CD8-positive, alpha-beta memory T cell (primary cell): ENCODE measurements at regions of chr2 and their contacts with region 1.

Region 1: DNA sequence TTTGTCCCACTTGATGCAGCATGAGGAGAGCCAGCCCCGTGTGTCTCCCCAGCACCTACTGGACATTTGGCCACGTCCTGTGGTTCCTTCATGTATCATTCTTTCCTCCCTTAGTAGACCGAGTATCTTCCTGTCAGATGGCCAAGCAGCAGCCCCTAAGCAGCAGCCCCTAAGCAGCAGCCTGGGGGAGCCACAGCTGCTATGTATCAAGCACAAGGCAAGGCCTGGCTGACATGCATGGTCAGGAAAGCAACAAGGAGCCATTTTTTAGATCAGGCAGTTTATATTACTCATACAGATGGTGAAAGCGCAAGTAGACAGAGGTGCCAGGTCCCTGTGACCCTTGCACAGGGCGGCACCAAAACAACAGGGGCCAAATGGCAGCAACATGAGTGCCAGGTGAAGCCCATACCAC is 22.1 kb downstream of the CHCHD5 start:
- DNase-seq: no peak
- H3K4me3 ChIP-seq: no peak overlapping the region
- H3K4me3 Mint-ChIP-seq: no peak overlapping the region
- H3K27ac ChIP-seq: no peak overlapping the region
- H3K27ac Mint-ChIP-seq: no peak overlapping the region
- H3K4me1 ChIP-seq: no peaks in the 10 kb centered on the region
- H3K4me1 Mint-ChIP-seq: no peaks in the 10 kb centered on the region
- H3K27me3 ChIP-seq: no peaks in the 10 kb centered on the region
- H3K27me3 Mint-ChIP-seq: peaks cover 0 to 3% of the 10 kb centered on the region in 2 donors

Region 2: GRCh38 chr2:112584134-112584890 is 22.2 kb before region 1 on chr2 and contains the start of gene CHCHD5:
- CTCF ChIA-PET with region 1: interaction called, 28 read pairs
- POLR2A ChIA-PET with region 1: no interaction called
- DNase-seq: peak; percentile 89 to 97 (median 94)
- H3K4me3 ChIP-seq: peak within 1 kb of the TSS; percentile 96
- H3K4me3 Mint-ChIP-seq: peak within 1 kb of the TSS; percentile 86 to 98 (median 96)
- H3K27ac ChIP-seq: peak within 1 kb of the TSS; percentile 89
- H3K27ac Mint-ChIP-seq: peak within 1 kb of the TSS; percentile 90 to 99 (median 98)
- H3K4me1 ChIP-seq: peaks cover 29% of the 10 kb centered on the region
- H3K4me1 Mint-ChIP-seq: peaks cover 30 to 42% (median 39%) of the 10 kb centered on the region in 3 donors
- H3K27me3 ChIP-seq: no peaks in the 10 kb centered on the region
- H3K27me3 Mint-ChIP-seq: no peaks in the 10 kb centered on the region
- total RNA-seq, gene CHCHD5: 33.1 to 36.6 TPM

Region 3: DNA sequence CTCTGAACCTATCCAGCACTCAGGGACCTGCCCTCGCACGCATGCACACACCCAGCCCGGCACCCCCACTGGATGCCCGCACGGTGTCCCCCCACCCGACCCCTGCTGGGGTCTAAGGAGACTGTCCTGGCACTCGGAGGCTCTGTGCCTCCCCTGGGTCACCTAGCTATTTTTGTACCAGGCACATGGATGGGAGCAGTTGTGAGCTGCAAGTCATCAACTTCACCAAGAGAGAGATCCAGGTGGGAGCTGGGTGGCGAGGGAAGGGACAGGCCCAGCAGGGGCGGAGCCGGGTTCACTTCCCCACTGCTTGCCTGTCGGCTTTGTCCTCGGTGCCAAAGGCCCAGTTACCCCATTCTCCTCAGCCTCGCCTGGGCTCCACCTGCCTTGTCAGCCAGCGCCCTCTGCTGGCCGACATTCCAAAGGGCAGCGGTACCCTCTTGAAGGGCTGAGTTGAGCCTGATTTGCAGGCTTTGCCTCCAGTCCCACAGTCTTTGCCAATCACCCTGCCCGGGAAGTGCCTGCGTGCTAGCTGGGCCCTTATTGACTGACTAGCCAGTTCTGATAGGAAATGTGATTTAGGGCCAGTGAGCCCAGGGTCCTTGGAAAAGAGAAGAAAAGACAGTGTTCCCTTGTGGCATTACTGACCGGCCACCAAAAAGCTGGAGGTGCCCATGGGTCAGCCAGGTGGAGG is 120.1 kb after region 1 on chr2:
- CTCF ChIA-PET with region 1: interaction called, 92 read pairs
- POLR2A ChIA-PET with region 1: interaction called, 3 read pairs
- DNase-seq: peak; percentile 76 to 90 (median 81)
- H3K4me3 ChIP-seq: no peak overlapping the region
- H3K4me3 Mint-ChIP-seq: no peak overlapping the region
- H3K27ac ChIP-seq: no peak overlapping the region
- H3K27ac Mint-ChIP-seq: peak overlapping the region in 1 of 8 donors; percentile 19
- H3K4me1 ChIP-seq: peaks cover 5% of the 10 kb centered on the region
- H3K4me1 Mint-ChIP-seq: peaks cover 4 to 5% (median 5%) of the 10 kb centered on the region in 3 donors
- H3K27me3 ChIP-seq: no peaks in the 10 kb centered on the region
- H3K27me3 Mint-ChIP-seq: peaks cover 0 to 9% of the 10 kb centered on the region in 2 donors

Region 4: GRCh38 chr2:112764071-112765044 is 157.9 kb after region 1 on chr2 and contains the start of gene CKAP2L:
- CTCF ChIA-PET with region 1: no interaction called
- POLR2A ChIA-PET with region 1: no interaction called
- DNase-seq: peak; percentile 94 to 97 (median 94)
- H3K4me3 ChIP-seq: peak within 1 kb of the TSS; percentile 90
- H3K4me3 Mint-ChIP-seq: peak within 1 kb of the TSS; percentile 88 to 98 (median 95)
- H3K27ac ChIP-seq: peak within 1 kb of the TSS; percentile 79
- H3K27ac Mint-ChIP-seq: peak within 1 kb of the TSS; percentile 65 to 96 (median 90)
- H3K4me1 ChIP-seq: peaks cover 14% of the 10 kb centered on the region
- H3K4me1 Mint-ChIP-seq: peaks cover 29 to 47% (median 39%) of the 10 kb centered on the region in 3 donors
- H3K27me3 ChIP-seq: no peaks in the 10 kb centered on the region
- H3K27me3 Mint-ChIP-seq: no peaks in the 10 kb centered on the region
- total RNA-seq, gene CKAP2L: 19.1 to 19.6 TPM